Ovary (tissue), 10 donors: ENCODE measurements at regions of chr18 and their contacts with region 1.

Region 1: GRCh38 chr18:26383454-26384270 is 157.4 kb downstream of the TAF4B start:
- DNase-seq: no peak
- H3K4me3 ChIP-seq: no peak overlapping the region
- H3K27ac ChIP-seq: no peak overlapping the region
- H3K4me1 ChIP-seq: peaks cover 2% of the 10 kb centered on the region
- H3K27me3 ChIP-seq: no peaks in the 10 kb centered on the region
- CTCF ChIP-seq: peak; percentile 31 to 73 (median 70)
- EP300 ChIP-seq: no peak
- POLR2A ChIP-seq: no peak

Region 2: GRCh38 chr18:26133652-26134051 is 250.0 kb before region 1 on chr18 and contains the start of gene PSMA8:
- intact Hi-C with region 1: no loop called
- DNase-seq: peak in 3 of 5 donors; percentile 12 to 39 (median 27)
- H3K4me3 ChIP-seq: no peak within 1 kb of the TSS
- H3K27ac ChIP-seq: no peak within 1 kb of the TSS
- H3K4me1 ChIP-seq: no peaks in the 10 kb centered on the region
- H3K27me3 ChIP-seq: no peaks in the 10 kb centered on the region
- CTCF ChIP-seq: no peak
- EP300 ChIP-seq: no peak
- POLR2A ChIP-seq: no peak
- total RNA-seq, gene PSMA8: 0.12 to 0.25 (median 0.15) TPM in 3 of 7 donors, not detected in the others

Region 3: GRCh38 chr18:26327062-26327461 is 56.6 kb before region 1 on chr18:
- intact Hi-C with region 1: no loop called
- DNase-seq: no peak
- H3K4me3 ChIP-seq: no peak overlapping the region
- H3K27ac ChIP-seq: no peak overlapping the region
- H3K4me1 ChIP-seq: no peaks in the 10 kb centered on the region
- H3K27me3 ChIP-seq: no peaks in the 10 kb centered on the region
- CTCF ChIP-seq: no peak
- EP300 ChIP-seq: no peak
- POLR2A ChIP-seq: no peak

Region 4: GRCh38 chr18:26438980-26439379 is 55.3 kb after region 1 on chr18:
- intact Hi-C with region 1: no loop called
- DNase-seq: no peak
- H3K4me3 ChIP-seq: no peak overlapping the region
- H3K27ac ChIP-seq: no peak overlapping the region
- H3K4me1 ChIP-seq: peaks cover 3% of the 10 kb centered on the region
- H3K27me3 ChIP-seq: no peaks in the 10 kb centered on the region
- CTCF ChIP-seq: no peak
- EP300 ChIP-seq: no peak
- POLR2A ChIP-seq: no peak

Region 5: DNA sequence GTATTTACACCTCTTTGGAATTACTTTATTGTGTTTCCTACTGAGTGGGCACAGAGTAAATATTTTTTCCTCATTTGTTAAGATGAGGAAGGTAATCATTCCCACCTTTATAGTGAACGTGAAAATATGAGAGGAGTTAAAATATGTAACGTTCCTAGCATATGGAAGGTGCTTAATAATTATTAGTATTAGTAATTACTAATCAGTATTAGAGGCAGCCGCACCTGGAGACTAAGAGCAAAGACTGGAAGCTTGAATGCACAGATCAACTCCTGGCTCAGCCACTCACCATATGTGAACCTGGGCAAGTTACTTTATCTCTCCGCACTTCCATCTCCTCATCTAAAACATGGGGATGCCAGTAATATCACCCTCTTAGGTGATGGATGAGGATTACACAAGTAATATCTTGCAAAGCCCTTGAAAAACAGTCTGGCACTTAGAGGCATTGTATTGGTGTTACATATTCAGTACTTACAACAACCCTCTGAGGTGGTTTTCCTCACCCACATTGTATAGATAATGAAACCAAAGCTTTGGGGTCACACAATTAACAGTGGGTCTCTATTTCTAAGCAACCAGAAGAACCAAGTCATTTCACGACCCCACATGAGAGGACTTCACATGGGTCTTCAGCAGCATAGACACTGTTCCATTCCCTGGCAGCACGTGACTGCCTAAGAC is 265.0 kb after region 1 on chr18:
- intact Hi-C with region 1: loop called in 1 of 4 experiments (anchors 2 kb)
- DNase-seq: no peak
- H3K4me3 ChIP-seq: no peak overlapping the region
- H3K27ac ChIP-seq: no peak overlapping the region
- H3K4me1 ChIP-seq: no peaks in the 10 kb centered on the region
- H3K27me3 ChIP-seq: no peaks in the 10 kb centered on the region
- CTCF ChIP-seq: no peak
- EP300 ChIP-seq: no peak
- POLR2A ChIP-seq: no peak